ENCODE measurements at regions of chr11 and their contacts with region 1.

Region 1: GRCh38 chr11:72080256-72080974 is at the starts of genes LRRC51 and NUMA1:
- DNase-seq: peak; percentile 100
- ATAC-seq: peak; percentile 96
- H3K4me3 Mint-ChIP-seq: peak within 1 kb of the TSS; percentile 97
- H3K27ac Mint-ChIP-seq: peak within 1 kb of the TSS; percentile 94
- H3K4me1 Mint-ChIP-seq: peaks cover 48% of the 10 kb centered on the region
- H3K27me3 Mint-ChIP-seq: no peaks in the 10 kb centered on the region
- total RNA-seq, gene LRRC51: 6.9 to 7.0 TPM
- total RNA-seq, gene NUMA1: 198 to 199 TPM

Region 2: DNA sequence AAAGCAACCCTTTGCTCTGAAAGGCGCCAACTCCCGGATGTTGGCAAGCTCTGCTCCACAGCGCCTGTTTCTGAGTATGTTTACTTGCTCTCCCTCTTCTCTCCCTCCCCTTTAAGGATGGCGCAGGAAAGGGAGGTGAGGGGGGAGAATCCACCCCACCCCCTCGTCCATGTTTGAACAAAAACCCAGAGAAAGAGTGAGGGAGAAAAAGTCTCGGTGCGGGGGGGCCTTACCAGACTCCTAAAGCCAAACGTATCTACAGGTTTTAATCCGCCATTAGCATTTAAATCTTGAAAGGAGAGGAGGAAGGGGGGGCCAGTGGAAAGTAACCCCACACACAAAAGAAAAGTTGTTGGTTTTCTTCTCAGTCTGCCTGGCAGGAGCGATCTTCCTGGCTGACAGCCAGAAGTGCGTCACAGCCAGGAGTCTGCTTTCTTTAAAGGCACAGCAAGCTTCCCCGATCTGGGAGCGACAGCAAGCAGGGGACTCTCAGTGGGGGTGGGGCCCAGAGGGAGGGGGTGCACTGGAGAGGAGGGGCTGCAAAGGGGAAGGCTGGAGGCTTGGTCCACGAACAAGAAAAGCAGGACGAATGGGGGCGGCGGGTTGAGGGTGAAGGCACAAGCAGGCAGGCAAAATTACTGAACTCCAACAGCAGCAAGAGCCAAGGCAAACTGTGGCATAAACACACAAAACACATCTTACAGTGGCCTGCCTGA is 39.5 kb before region 1 on chr11:
- CTCF ChIA-PET with region 1: interaction called, 9 read pairs
- POLR2A ChIA-PET with region 1: interaction called, 18 read pairs
- DNase-seq: peak; percentile 73
- ATAC-seq: peak; percentile 30
- H3K4me3 Mint-ChIP-seq: no peak overlapping the region
- H3K27ac Mint-ChIP-seq: no peak overlapping the region
- H3K4me1 Mint-ChIP-seq: peaks cover 7% of the 10 kb centered on the region
- H3K27me3 Mint-ChIP-seq: no peaks in the 10 kb centered on the region

Region 3: DNA sequence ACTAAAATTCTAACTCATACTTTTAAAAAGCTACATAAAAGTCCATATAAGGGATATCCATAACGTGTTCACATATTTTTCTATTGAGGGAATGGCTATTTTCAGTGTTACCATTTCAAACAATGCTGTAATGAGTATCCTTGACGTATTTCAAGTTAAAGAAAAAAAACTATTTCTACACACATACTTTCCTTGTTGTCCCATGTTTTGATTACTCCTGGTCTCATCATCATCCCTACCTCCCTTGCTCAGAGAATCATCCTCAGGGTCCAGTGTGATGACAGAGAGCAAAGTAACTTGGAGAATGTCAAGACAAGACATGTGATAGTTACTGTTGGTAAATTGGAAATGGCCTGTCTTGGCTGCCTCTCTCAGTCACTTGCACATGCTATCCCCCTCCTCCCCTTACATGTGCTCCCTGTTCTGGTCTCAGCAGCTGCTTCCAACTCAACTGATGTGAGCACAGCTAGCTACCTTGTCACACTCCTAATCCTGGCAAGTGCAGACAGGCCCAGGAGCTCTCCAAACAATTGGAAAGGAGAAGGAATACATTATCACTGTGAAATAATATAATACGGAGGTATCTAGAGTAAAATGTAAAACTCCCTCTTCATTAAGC is 21.9 kb before region 1 on chr11:
- CTCF ChIA-PET with region 1: no interaction called
- POLR2A ChIA-PET with region 1: no interaction called
- DNase-seq: no peak
- ATAC-seq: no peak
- H3K4me3 Mint-ChIP-seq: no peak overlapping the region
- H3K27ac Mint-ChIP-seq: no peak overlapping the region
- H3K4me1 Mint-ChIP-seq: peaks cover 9% of the 10 kb centered on the region
- H3K27me3 Mint-ChIP-seq: no peaks in the 10 kb centered on the region

Region 4: DNA sequence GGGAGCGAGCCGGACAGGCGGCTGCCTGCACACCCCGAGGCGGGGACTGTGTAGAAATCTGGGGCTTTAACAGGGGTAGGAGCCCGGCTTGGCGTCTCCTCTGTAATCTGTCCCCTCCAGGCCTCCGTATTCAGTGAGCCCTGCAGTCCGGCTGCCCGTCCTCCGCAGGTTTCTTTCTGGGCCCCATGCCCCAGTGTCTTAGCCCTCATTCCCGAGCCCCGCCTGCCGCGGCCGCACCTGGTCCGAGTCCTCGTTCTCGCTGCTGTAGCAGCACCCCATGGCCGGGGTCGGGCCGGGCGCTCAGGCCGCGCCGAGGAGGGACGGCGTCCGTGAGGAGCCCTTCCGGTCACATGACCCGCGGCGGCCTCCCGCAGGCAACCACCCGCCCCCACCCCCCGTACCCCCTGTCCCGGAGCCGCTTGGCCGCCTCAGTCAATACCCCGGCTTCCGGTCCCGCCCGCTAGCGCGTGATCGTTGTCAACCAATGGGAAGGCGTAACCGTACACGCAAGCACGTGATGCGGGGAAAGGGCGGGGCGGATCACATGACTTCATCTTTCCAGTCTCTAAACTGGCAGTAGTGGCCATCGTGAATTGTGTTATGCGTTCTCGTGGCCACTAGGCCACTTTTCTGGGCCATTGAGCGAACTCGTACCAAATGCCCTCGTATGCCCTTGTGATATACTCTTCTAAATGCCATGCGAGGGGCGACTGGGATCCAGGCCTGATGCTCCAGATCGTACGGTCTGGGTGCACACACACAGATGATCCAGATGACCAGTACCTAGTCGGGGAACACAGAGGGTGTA is 22.7 kb after region 1 on chr11 and contains the start of gene LAMTOR1:
- CTCF ChIA-PET with region 1: interaction called, 9 read pairs
- POLR2A ChIA-PET with region 1: interaction called, 10 read pairs
- DNase-seq: peak; percentile 99
- ATAC-seq: peak; percentile 95
- H3K4me3 Mint-ChIP-seq: peak within 1 kb of the TSS; percentile 96
- H3K27ac Mint-ChIP-seq: peak within 1 kb of the TSS; percentile 87
- H3K4me1 Mint-ChIP-seq: peaks cover 38% of the 10 kb centered on the region
- H3K27me3 Mint-ChIP-seq: no peaks in the 10 kb centered on the region
- total RNA-seq, gene LAMTOR1: 72.7 to 77.0 TPM

Region 5: GRCh38 chr11:72195871-72196270 is 115.5 kb after region 1 on chr11:
- CTCF ChIA-PET with region 1: no interaction called
- POLR2A ChIA-PET with region 1: no interaction called
- DNase-seq: no peak
- ATAC-seq: no peak
- H3K4me3 Mint-ChIP-seq: no peak overlapping the region
- H3K27ac Mint-ChIP-seq: no peak overlapping the region
- H3K4me1 Mint-ChIP-seq: no peaks in the 10 kb centered on the region
- H3K27me3 Mint-ChIP-seq: peaks cover 3% of the 10 kb centered on the region

Measured in activated CD8-positive, alpha-beta T cell treated with anti-CD3 and anti-CD28 coated beads, Interleukin-2, amount 10 ng/mL, durations not matched to agents 7 days and 5 days (primary cell).